B cell (primary cell): ENCODE measurements at regions of chr1 and their contacts with region 1.

Region 1: DNA sequence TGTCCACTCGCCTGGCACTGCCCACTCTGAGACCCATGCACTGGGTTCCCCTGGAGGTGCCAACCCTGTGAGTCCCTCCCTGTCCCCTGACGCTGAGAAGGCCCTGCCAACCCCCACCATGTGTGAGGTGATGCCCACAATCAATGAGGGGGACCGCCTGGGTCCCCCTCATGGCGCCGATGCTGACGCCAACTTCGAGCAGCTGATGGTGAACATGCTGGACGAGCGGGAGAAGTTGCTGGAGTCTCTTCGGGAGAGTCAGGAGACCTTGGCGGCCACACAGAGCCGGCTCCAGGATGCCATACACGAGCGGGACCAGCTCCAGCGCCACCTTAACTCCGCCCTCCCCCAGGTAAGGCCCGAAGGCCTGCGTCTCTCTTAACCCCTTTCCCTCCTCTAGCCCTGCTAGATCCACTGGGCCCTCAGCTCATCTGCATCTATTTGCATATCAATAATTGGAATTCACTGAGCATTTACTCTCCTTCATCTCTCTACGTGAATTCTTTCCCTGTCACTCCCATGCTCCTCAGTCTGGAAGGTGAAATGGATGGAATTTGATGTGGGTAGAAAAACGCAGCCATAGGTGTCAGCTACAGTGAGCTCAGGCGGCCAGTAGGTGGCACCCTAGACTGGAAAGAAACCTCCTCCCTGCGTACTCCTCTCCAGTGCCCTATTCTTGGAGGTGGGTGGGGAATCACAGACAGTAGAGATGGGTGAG is 12.8 kb downstream of the PPFIA4 start:
- DNase-seq: peak; percentile 73
- ATAC-seq: peak; percentile 78
- H3K4me3 ChIP-seq: no peak overlapping the region
- H3K4me3 Mint-ChIP-seq: no peak overlapping the region
- H3K27ac ChIP-seq: no peak overlapping the region
- H3K27ac Mint-ChIP-seq: no peak overlapping the region
- H3K4me1 ChIP-seq: peaks cover 0 to 2% of the 10 kb centered on the region in 2 donors
- H3K4me1 Mint-ChIP-seq: peaks cover 1% of the 10 kb centered on the region
- H3K27me3 ChIP-seq: peaks cover 0 to 10% (median 2%) of the 10 kb centered on the region in 4 experiments
- H3K27me3 Mint-ChIP-seq: peaks cover 12% of the 10 kb centered on the region
- CTCF ChIP-seq: peak; percentile 93

Region 2: GRCh38 chr1:202923533-202923932 is 115.5 kb before region 1 on chr1:
- CTCF ChIA-PET with region 1: no interaction called
- POLR2A ChIA-PET with region 1: no interaction called
- intact Hi-C with region 1: no loop called
- DNase-seq: no peak
- ATAC-seq: no peak
- H3K4me3 ChIP-seq: no peak overlapping the region
- H3K4me3 Mint-ChIP-seq: no peak overlapping the region
- H3K27ac ChIP-seq: no peak overlapping the region
- H3K27ac Mint-ChIP-seq: no peak overlapping the region
- H3K4me1 ChIP-seq: peaks cover 9 to 14% of the 10 kb centered on the region in 2 donors
- H3K4me1 Mint-ChIP-seq: peaks cover 21% of the 10 kb centered on the region
- H3K27me3 ChIP-seq: no peaks in the 10 kb centered on the region
- H3K27me3 Mint-ChIP-seq: no peaks in the 10 kb centered on the region
- CTCF ChIP-seq: no peak

Region 3: DNA sequence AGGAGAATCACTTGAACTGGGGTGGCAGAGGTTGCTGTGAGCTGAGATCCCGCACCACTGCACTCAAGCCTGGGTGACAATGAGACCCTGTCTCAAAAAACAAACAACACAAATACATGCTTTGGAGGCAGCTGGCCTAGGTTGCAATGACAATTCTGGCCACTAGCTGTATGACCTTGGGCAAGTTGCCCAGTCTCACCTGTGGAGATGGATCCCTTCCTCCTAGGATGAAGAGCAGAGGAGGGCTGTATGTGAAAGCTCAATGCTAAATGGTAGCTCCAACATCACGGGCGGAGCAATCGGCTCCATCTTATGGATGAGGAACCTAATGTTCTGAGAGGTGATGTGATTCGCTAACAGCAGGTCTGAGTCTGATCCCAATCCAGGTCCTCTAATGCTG is 109.1 kb after region 1 on chr1:
- CTCF ChIA-PET with region 1: no interaction called
- POLR2A ChIA-PET with region 1: no interaction called
- intact Hi-C with region 1: no loop called
- DNase-seq: no peak
- ATAC-seq: no peak
- H3K4me3 ChIP-seq: no peak overlapping the region
- H3K4me3 Mint-ChIP-seq: no peak overlapping the region
- H3K27ac ChIP-seq: no peak overlapping the region
- H3K27ac Mint-ChIP-seq: no peak overlapping the region
- H3K4me1 ChIP-seq: no peaks in the 10 kb centered on the region
- H3K4me1 Mint-ChIP-seq: no peaks in the 10 kb centered on the region
- H3K27me3 ChIP-seq: no peaks in the 10 kb centered on the region
- H3K27me3 Mint-ChIP-seq: peaks cover 8% of the 10 kb centered on the region
- CTCF ChIP-seq: peak; percentile 15

Region 4: GRCh38 chr1:203172128-203173010 is 133.3 kb after region 1 on chr1:
- CTCF ChIA-PET with region 1: interaction called, 18 read pairs
- POLR2A ChIA-PET with region 1: no interaction called
- intact Hi-C with region 1: no loop called
- DNase-seq: peak; percentile 45
- ATAC-seq: no peak
- H3K4me3 ChIP-seq: no peak overlapping the region
- H3K4me3 Mint-ChIP-seq: no peak overlapping the region
- H3K27ac ChIP-seq: no peak overlapping the region
- H3K27ac Mint-ChIP-seq: no peak overlapping the region
- H3K4me1 ChIP-seq: peaks cover 0 to 8% of the 10 kb centered on the region in 2 donors
- H3K4me1 Mint-ChIP-seq: peaks cover 1% of the 10 kb centered on the region
- H3K27me3 ChIP-seq: peaks cover 0 to 6% (median 0%) of the 10 kb centered on the region in 4 experiments
- H3K27me3 Mint-ChIP-seq: peaks cover 7% of the 10 kb centered on the region
- CTCF ChIP-seq: peak; percentile 70